ENCODE measurements at regions of chr20 and their contacts with region 1.

Region 1: DNA sequence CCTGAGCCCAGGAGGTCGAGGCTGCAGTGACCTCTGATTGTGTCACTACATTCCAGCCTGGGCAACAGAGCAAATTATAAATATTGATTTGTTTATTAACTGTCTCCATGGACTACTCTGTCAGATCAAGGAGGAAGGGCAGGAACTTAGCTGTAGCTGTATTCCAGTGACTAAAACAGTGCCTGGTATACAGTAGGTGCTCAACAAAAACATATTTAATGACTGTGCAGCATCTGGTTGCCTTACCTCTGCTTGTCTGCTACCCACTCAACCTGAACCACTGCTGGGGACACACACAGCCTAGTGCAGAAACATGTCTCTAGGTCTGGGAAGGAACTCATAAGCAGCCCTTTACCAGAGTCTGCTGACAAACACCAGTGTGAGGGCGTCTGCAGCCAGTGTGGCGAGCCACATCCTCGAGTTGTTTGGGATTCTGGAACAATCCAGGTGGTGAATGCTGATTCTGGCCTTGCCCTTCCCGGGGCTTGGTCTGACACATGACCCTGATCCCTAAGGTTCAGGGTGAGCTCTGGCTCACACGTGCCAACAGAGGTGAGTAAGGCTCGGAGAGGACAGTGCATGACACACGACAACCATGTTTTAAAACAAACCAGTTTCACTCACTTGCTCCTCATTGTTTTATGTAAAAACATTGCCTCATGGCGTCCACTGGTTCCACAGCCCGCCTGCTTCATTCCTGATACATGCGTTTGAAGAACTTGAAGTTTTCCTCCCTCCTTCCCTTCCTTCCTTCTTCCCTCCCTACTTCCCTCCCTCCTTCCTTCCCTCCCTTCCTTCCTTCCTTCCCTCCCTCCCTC is 118.0 kb upstream of the ZNF217 start:
- DNase-seq: no peak

Region 2: GRCh38 chr20:53463101-53463972 is 248.3 kb before region 1 on chr20:
- intact Hi-C with region 1: no loop called
- DNase-seq: no peak

Region 3: GRCh38 chr20:53773792-53774401 is 62.3 kb after region 1 on chr20:
- intact Hi-C with region 1: loop called (anchors 10 kb)
- DNase-seq: no peak

Region 4: DNA sequence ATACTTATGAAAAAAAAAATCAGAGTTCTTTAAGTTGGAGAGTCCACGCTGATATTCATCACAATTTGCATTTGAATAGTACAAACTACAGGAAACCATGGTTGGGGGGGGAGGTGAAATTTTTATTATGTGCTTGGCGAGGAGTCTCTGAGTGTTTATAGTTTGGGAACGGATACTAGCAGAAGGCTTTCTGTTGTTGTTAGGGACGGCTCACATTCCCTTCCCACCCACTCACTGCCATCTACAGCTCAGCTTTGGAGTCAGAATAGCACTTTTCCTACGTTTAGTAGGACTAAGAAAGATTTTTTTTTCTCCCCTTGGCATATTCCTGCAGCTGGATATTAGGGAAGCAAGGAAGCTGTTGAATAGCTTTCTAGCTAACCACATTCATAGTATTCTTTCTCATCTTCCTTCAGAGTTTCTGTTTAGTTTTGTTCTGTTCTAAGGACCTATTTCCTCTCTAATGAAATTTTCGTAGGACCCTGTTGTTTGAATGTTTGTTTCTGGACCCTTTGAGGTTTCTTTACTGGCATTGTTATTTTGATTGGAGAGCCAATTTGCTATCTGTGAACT is 117.2 kb after region 1 on chr20:
- intact Hi-C with region 1: no loop called
- DNase-seq: no peak

Measured in posterior cingulate gyrus (tissue), 11 donors.